ENCODE measurements at regions of chr1 and their contacts with region 1.

Region 1: GRCh38 chr1:181424786-181425403 is 58.4 kb upstream of the CACNA1E start:
- DNase-seq: peak; percentile 88
- ATAC-seq: peak; percentile 63
- H3K4me3 Mint-ChIP-seq: peak overlapping the region; percentile 43
- H3K27ac Mint-ChIP-seq: peak overlapping the region; percentile 18
- H3K4me1 Mint-ChIP-seq: peaks cover 12% of the 10 kb centered on the region
- H3K27me3 Mint-ChIP-seq: peaks cover 28% of the 10 kb centered on the region

Region 2: GRCh38 chr1:180515864-180516388 is 909.0 kb before region 1 on chr1:
- CTCF ChIA-PET with region 1: interaction called, 3 read pairs
- POLR2A ChIA-PET with region 1: no interaction called
- intact Hi-C with region 1: loop called in 1 of 2 experiments (anchors 10 kb)
- DNase-seq: peak; percentile 76
- ATAC-seq: peak; percentile 100
- H3K4me3 Mint-ChIP-seq: no peak overlapping the region
- H3K27ac Mint-ChIP-seq: no peak overlapping the region
- H3K4me1 Mint-ChIP-seq: no peaks in the 10 kb centered on the region
- H3K27me3 Mint-ChIP-seq: peaks cover 4% of the 10 kb centered on the region

Region 3: GRCh38 chr1:181189691-181190363 is 235.1 kb before region 1 on chr1:
- CTCF ChIA-PET with region 1: interaction called, 49 read pairs
- POLR2A ChIA-PET with region 1: no interaction called
- intact Hi-C with region 1: loop called (anchors 1 kb)
- DNase-seq: peak; percentile 85
- ATAC-seq: peak; percentile 94
- H3K4me3 Mint-ChIP-seq: no peak overlapping the region
- H3K27ac Mint-ChIP-seq: no peak overlapping the region
- H3K4me1 Mint-ChIP-seq: no peaks in the 10 kb centered on the region
- H3K27me3 Mint-ChIP-seq: peaks cover 2% of the 10 kb centered on the region

Region 4: GRCh38 chr1:181318022-181318857 is 106.7 kb before region 1 on chr1:
- CTCF ChIA-PET with region 1: interaction called, 4 read pairs
- POLR2A ChIA-PET with region 1: no interaction called
- intact Hi-C with region 1: loop called in 1 of 2 experiments (anchors 5 kb)
- DNase-seq: peak; percentile 27
- ATAC-seq: peak; percentile 42
- H3K4me3 Mint-ChIP-seq: peak overlapping the region; percentile 46
- H3K27ac Mint-ChIP-seq: peak overlapping the region; percentile 30
- H3K4me1 Mint-ChIP-seq: peaks cover 29% of the 10 kb centered on the region
- H3K27me3 Mint-ChIP-seq: peaks cover 55% of the 10 kb centered on the region

Region 5: DNA sequence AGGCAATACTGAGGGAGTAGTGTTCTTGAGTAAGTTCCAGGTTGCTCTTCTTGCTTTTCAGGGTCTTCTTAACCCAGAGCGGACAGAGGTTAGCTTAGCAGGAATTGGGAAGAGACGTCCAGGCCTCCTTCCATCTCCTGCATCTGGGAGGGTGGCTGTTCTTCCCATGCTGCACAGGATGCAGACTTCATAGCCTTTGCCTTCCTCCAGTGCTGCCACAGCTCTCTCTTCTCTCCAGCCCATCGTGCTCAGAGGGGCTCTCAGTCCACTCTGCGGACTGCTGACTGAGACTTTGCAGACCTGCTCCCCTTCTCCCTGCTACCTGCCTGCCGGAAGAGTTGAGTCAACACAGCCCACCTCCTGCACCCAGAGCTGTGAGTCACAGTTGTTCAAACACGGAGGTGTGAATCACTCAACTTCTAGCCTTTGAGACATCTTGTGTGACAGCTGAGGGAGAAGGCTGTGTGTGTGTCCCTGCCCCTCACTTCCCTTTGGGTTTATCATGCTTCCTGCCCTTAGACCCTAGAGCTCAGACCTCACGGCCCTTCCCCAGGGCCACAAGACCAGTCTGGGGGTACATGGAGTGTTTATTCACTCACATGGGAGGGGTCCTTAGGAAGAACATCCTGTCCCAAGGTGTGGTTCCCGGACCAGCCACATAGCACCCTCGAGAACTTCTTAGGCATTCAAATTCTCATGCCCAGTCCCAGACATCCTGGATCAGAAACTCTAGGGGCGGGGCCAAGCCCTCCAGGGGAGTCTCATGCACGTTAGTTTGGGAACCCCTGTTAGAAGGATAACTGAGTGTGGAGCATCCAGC is 99.9 kb before region 1 on chr1:
- CTCF ChIA-PET with region 1: interaction called, 4 read pairs
- POLR2A ChIA-PET with region 1: no interaction called
- intact Hi-C with region 1: loop called in 1 of 2 experiments (anchors 2 kb)
- DNase-seq: peak; percentile 80
- ATAC-seq: peak; percentile 100
- H3K4me3 Mint-ChIP-seq: no peak overlapping the region
- H3K27ac Mint-ChIP-seq: no peak overlapping the region
- H3K4me1 Mint-ChIP-seq: peaks cover 14% of the 10 kb centered on the region
- H3K27me3 Mint-ChIP-seq: peaks cover 6% of the 10 kb centered on the region

Region 6: GRCh38 chr1:181397845-181398244 is 27.1 kb before region 1 on chr1:
- CTCF ChIA-PET with region 1: interaction called, 15 read pairs
- POLR2A ChIA-PET with region 1: no interaction called
- intact Hi-C with region 1: loop called in 1 of 2 experiments (anchors 2 kb)
- DNase-seq: peak; percentile 17
- ATAC-seq: peak; percentile 27
- H3K4me3 Mint-ChIP-seq: no peak overlapping the region
- H3K27ac Mint-ChIP-seq: peak overlapping the region; percentile 76
- H3K4me1 Mint-ChIP-seq: peaks cover 31% of the 10 kb centered on the region
- H3K27me3 Mint-ChIP-seq: no peaks in the 10 kb centered on the region